Breast epithelium (tissue), 4 donors: ENCODE measurements at regions of chr7 and their contacts with region 1.

Region 1: GRCh38 chr7:155471728-155472127 is 13.8 kb downstream of the EN2 start:
- DNase-seq: no peak
- H3K4me3 ChIP-seq: no peak overlapping the region
- H3K27ac ChIP-seq: no peak overlapping the region
- H3K4me1 ChIP-seq: peaks cover 0 to 8% of the 10 kb centered on the region in 2 donors
- H3K27me3 ChIP-seq: peaks cover 7 to 98% of the 10 kb centered on the region in 2 donors
- CTCF ChIP-seq: no peak
- POLR2A ChIP-seq: no peak

Region 2: GRCh38 chr7:155482511-155483183 is 10.9 kb after region 1 on chr7:
- intact Hi-C with region 1: loop called (anchors 1 kb)
- DNase-seq: no peak
- H3K4me3 ChIP-seq: no peak overlapping the region
- H3K27ac ChIP-seq: no peak overlapping the region
- H3K4me1 ChIP-seq: no peaks in the 10 kb centered on the region
- H3K27me3 ChIP-seq: peaks cover 0 to 33% of the 10 kb centered on the region in 2 donors
- CTCF ChIP-seq: no peak
- POLR2A ChIP-seq: no peak

Region 3: DNA sequence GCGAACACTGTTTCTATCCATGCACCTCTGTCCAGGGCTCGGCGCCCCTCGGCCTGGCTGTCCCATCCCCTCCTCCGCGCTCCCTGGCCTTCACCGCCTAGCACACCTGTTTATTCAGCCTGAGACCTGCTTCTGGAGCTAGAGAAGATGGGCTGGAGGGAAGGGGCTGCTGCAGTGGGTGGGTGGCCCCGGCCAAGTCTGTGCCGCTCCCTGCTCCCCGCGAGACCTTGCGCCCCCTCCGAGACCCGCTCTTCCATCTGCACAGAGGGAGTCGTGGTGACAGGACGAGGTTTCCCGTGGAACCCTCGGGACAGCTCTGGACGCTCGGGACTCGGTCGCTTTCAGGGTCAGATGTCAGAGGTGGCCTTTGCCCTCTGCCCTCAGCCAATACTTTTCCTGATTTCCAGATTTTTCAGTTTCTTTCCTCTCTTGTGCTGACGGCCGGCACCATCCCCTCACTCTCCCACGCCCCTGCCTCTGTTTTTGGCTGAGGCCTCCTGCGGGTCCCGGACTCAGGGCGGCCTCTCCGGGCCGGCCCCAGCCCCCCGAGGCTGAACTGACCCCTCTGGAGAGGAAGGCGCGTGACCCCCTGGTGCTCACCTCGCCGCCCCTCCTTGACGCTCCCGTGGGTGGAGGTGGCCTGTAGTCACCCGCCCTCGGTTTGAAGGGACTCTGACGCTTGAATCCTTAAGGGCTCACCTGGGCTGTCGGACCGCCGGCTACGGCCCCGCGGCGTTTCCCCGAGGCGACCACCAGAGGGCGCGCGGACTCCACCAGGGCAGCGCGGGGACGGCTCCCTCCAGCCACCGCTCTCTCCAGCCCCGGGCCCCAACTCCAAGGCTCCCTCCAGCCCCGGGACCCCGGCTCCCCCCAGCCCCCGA is 324.9 kb after region 1 on chr7:
- intact Hi-C with region 1: no loop called
- DNase-seq: no peak
- H3K4me3 ChIP-seq: peak overlapping the region in 1 of 3 donors; percentile 39
- H3K27ac ChIP-seq: no peak overlapping the region
- H3K4me1 ChIP-seq: no peaks in the 10 kb centered on the region
- H3K27me3 ChIP-seq: peaks cover 0 to 43% of the 10 kb centered on the region in 2 donors
- CTCF ChIP-seq: peak in 2 of 3 donors; percentile 64 to 71
- POLR2A ChIP-seq: no peak

Region 4: DNA sequence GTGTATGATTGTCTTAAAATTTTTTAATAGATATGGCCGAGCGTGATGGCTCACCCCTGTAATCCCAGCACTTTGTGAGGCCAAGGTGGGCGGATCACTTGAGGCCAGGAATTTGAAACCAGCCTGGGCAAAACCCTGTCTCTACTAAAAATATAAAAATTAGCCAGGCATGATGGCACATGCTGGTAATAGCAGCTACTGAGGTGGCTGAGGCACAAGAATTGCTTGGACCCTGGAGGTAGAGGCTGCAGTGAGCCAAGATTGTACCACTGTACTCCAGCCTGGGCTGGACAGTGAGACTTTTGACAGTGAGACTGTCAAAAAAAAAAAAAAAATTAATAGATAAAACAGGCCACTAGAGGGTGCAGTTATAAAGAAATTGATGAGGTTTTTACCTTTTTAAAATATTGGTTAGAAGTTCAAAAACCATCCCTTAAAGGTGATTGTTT is 1498.3 kb after region 1 on chr7:
- intact Hi-C with region 1: no loop called
- DNase-seq: peak in 1 of 2 donors; percentile 63
- H3K4me3 ChIP-seq: no peak overlapping the region
- H3K27ac ChIP-seq: no peak overlapping the region
- H3K4me1 ChIP-seq: no peaks in the 10 kb centered on the region
- H3K27me3 ChIP-seq: no peaks in the 10 kb centered on the region
- CTCF ChIP-seq: peak; percentile 21 to 34 (median 34)
- POLR2A ChIP-seq: no peak